GM10248 (cell line): ENCODE measurements at regions of chr4 and their contacts with region 1.

Region 1: GRCh38 chr4:76067652-76068286 is 6.7 kb upstream of the ART3 start:
- DNase-seq: peak; percentile 70
- CTCF ChIP-seq: peak; percentile 86

Region 2: DNA sequence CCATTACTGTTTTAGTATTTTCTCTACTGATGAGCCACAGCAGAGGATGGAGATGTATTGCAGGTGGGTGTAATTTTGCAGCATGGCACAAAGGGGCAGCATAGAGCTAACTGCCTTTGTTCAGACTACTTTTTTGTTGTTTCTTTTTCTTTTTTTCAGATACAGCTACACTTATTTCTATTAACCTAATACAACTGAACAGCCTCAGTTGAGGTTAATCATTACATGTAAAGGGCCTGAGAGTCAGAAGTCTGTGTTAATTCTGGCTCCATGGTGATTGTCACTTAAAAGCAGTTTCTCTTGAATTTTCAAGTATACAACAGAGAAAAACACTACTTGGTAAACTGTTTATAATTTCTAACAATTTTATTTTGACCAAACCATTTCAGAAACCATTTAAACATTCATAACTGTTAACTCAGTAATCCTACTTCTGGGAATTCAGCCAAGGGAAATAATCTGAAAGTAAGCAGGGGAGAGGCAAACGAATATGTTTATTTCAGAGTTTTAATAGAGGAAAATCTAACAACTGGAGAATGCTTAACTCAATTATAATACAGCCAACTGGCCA is 151.6 kb before region 1 on chr4:
- CTCF ChIA-PET with region 1: interaction called, 17 read pairs
- POLR2A ChIA-PET with region 1: no interaction called
- DNase-seq: peak; percentile 65
- CTCF ChIP-seq: peak; percentile 73

Region 3: GRCh38 chr4:75989846-75990528 is 77.8 kb before region 1 on chr4:
- CTCF ChIA-PET with region 1: interaction called, 43 read pairs
- POLR2A ChIA-PET with region 1: no interaction called
- DNase-seq: no peak
- CTCF ChIP-seq: no peak

Region 4: GRCh38 chr4:76055016-76055415 is 12.8 kb before region 1 on chr4:
- CTCF ChIA-PET with region 1: interaction called, 10 read pairs
- POLR2A ChIA-PET with region 1: no interaction called
- DNase-seq: peak; percentile 67
- CTCF ChIP-seq: no peak

Region 5: GRCh38 chr4:76257824-76258223 is 190.1 kb after region 1 on chr4:
- CTCF ChIA-PET with region 1: no interaction called
- POLR2A ChIA-PET with region 1: no interaction called
- DNase-seq: no peak
- CTCF ChIP-seq: no peak